ENCODE measurements at regions of chr1 and their contacts with region 1.

Region 1: GRCh38 chr1:175887981-175888433 is 144.6 kb upstream of the TNR start:
- DNase-seq: peak; percentile 61 to 88
- ATAC-seq: peak; percentile 94 to 99
- H3K4me3 ChIP-seq: no peak overlapping the region
- H3K27ac ChIP-seq: no peak overlapping the region
- H3K4me1 ChIP-seq: no peaks in the 10 kb centered on the region
- CTCF ChIP-seq: peak; percentile 62
- EP300 ChIP-seq: no peak
- POLR2A ChIP-seq: no peak
- RAD21 ChIP-seq: peak; percentile 60 to 72

Region 2: GRCh38 chr1:176159993-176160392 is 272.0 kb after region 1 on chr1:
- CTCF ChIA-PET with region 1: no interaction called
- POLR2A ChIA-PET with region 1: interaction called, 11 read pairs
- DNase-seq: no peak
- ATAC-seq: no peak
- H3K4me3 ChIP-seq: no peak overlapping the region
- H3K27ac ChIP-seq: no peak overlapping the region
- H3K4me1 ChIP-seq: no peaks in the 10 kb centered on the region
- CTCF ChIP-seq: no peak
- EP300 ChIP-seq: no peak
- POLR2A ChIP-seq: no peak
- RAD21 ChIP-seq: no peak